ENCODE measurements at regions of chr2 and their contacts with region 1.

Region 1: DNA sequence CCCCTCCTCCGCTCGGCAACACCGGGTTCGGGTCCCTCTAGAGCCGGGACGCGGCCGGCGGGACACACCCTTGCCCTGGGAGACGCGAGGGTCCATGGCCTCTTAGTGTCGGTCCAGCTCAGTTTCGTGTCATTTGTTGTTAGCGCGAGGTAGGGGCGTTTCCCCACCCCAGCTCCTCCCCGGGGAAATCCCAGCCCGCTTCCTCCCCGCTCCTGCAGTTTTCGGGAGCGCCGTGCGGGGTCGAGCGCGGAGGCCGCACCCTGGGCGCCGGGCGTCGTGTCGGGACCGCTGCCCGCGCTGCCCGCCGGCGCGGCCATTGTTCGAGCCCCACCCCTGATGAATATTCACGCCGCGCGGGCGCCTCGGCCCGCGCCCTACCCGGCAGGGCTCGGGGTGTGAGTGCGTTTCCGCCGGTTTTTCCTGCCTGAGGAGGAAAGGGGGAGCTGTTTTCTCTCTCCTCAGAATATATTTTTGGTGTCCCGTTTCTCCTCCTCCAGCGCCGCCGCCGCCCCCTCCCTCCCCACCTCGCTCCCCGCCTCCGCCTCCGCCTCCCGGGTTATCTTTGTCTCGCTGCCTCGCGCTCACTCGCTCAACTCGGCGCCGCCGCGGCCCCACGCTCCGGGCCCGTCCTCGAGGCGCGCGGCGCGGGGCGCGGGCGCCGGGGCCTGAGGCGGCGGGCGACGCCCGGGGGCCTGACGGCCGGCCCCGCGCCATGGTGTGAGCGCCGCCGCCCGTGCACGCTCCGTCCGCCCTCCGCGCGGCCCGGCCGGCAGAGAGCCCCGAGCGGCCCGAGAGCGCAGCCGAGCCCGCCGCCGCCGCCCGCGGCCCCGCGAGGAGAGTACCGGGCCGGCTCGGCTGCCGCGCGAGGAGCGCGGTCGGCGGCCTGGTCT is at the start of gene MAP4K4:
- DNase-seq: peak; percentile 59 to 74
- H3K4me3 ChIP-seq: peak within 1 kb of the TSS; percentile 96
- H3K27ac ChIP-seq: peak within 1 kb of the TSS; percentile 59
- H3K4me1 ChIP-seq: peaks cover 21% of the 10 kb centered on the region
- H3K27me3 ChIP-seq: no peaks in the 10 kb centered on the region
- CTCF ChIP-seq: peak; percentile 24; the same call in 1 of the 2 replicates
- total RNA-seq, gene MAP4K4: 100 and 129 TPM in 2 replicates

Region 2: GRCh38 chr2:101341901-101342624 is 355.3 kb before region 1 on chr2:
- CTCF ChIA-PET with region 1: interaction called, 3 read pairs
- POLR2A ChIA-PET with region 1: no interaction called
- intact Hi-C with region 1: loop called (anchors 5 kb)
- DNase-seq: peak in 1 of 2 experiments; percentile 71
- H3K4me3 ChIP-seq: no peak overlapping the region
- H3K27ac ChIP-seq: no peak overlapping the region
- H3K4me1 ChIP-seq: peaks cover 39% of the 10 kb centered on the region
- H3K27me3 ChIP-seq: no peaks in the 10 kb centered on the region
- CTCF ChIP-seq: peak; percentile 94

Region 3: GRCh38 chr2:101387151-101387807 is 310.1 kb before region 1 on chr2 and contains the start of gene CREG2:
- CTCF ChIA-PET with region 1: no interaction called
- POLR2A ChIA-PET with region 1: no interaction called
- intact Hi-C with region 1: loop called (anchors 1 kb)
- DNase-seq: peak; percentile 47 to 75
- H3K4me3 ChIP-seq: peak within 1 kb of the TSS; percentile 84
- H3K27ac ChIP-seq: peak within 1 kb of the TSS; percentile 80
- H3K4me1 ChIP-seq: peaks cover 26% of the 10 kb centered on the region
- H3K27me3 ChIP-seq: no peaks in the 10 kb centered on the region
- CTCF ChIP-seq: peak; percentile 69
- total RNA-seq, gene CREG2: 9.0 and 12.3 TPM in 2 replicates

Region 4: DNA sequence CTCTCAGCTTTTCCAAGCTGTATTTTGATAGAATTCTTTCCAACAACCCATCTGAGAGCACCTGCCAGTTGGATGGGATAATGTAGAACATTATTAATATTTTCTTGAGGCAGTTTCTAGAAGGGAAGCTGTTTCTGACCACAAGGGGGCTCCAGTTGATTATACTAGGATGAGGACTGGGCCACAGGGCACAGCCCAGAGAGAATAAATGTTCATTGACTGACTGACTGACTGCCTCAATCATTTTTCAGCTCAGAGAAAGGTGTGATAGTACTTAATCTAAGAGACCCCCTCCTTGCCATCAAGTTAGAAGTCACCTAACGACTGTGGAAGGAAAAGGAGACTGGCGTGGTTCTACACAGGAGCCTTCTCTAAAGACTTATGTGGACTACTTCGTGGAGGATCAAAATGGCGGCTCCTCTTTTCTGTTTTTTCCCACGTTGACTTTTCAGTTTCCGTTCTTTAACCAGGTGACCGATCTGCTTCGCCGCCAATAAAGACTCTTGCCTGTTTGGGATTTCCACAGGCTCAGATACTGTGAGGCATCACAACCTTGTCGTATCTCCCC is 278.2 kb before region 1 on chr2:
- CTCF ChIA-PET with region 1: no interaction called
- POLR2A ChIA-PET with region 1: interaction called, 6 read pairs
- intact Hi-C with region 1: loop called (anchors 10 kb)
- DNase-seq: peak; percentile 34 to 47
- H3K4me3 ChIP-seq: no peak overlapping the region
- H3K27ac ChIP-seq: no peak overlapping the region
- H3K4me1 ChIP-seq: 0 out of 2 replicates have a peak, but pooled peaks cover 5% of the 10 kb centered on the region
- H3K27me3 ChIP-seq: no peaks in the 10 kb centered on the region
- CTCF ChIP-seq: peak; percentile 90

Region 5: GRCh38 chr2:101630224-101630949 is 67.0 kb before region 1 on chr2:
- CTCF ChIA-PET with region 1: no interaction called
- POLR2A ChIA-PET with region 1: interaction called, 4 read pairs
- intact Hi-C with region 1: loop called (anchors 2 kb)
- DNase-seq: peak; percentile 91 to 98
- H3K4me3 ChIP-seq: no peak overlapping the region
- H3K27ac ChIP-seq: peak overlapping the region; percentile 94
- H3K4me1 ChIP-seq: peaks cover 42% of the 10 kb centered on the region
- H3K27me3 ChIP-seq: no peaks in the 10 kb centered on the region
- CTCF ChIP-seq: no peak

Region 6: DNA sequence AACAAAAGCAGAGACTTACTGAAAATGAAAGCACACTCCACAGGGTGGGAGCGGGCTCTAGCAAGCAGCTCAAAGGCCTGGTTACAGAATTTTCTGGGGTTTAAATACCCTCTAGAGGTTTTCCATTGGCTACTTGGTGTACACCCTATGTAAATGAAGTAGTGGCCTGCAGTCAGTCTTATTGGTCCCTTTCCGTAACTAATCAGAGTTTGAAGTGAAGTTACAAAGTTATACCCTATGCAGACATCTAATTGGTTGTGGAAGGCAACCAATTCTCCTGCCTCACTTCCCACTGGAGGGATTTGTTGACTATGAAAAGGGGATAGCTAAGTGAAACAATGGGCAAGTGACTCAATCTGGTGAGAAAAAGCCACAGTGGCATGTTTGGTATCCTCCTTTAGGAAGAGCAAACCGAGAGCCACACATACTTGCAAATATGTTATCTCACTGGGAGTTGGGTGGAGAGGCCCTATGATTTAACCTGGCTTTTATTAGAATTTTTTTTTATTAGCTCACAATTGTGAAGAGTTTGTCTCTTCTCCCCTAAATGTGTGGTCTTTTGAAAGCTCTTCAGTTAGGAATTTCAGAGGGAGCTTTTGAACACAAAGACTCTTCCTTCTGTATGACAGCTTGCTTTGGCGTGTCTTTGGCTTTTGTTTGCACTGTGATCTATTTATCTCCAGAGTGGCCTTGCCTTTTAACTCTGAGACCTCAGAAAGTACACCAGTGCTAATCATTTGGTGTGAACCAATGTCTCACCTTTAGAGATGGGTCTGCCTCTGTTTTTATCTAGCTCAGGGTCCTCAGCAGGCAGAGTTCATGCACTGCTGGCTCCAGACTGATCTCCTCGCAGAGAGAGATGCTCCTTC is 69.7 kb after region 1 on chr2:
- CTCF ChIA-PET with region 1: interaction called, 3 read pairs
- POLR2A ChIA-PET with region 1: interaction called, 12 read pairs
- intact Hi-C with region 1: loop called (anchors 5 kb)
- DNase-seq: peak; percentile 60 to 89
- H3K4me3 ChIP-seq: no peak overlapping the region
- H3K27ac ChIP-seq: peak overlapping the region; percentile 73
- H3K4me1 ChIP-seq: peaks cover 73% of the 10 kb centered on the region
- H3K27me3 ChIP-seq: no peaks in the 10 kb centered on the region
- CTCF ChIP-seq: no peak